ENCODE measurements at regions of chr9 and their contacts with region 1.

Region 1: DNA sequence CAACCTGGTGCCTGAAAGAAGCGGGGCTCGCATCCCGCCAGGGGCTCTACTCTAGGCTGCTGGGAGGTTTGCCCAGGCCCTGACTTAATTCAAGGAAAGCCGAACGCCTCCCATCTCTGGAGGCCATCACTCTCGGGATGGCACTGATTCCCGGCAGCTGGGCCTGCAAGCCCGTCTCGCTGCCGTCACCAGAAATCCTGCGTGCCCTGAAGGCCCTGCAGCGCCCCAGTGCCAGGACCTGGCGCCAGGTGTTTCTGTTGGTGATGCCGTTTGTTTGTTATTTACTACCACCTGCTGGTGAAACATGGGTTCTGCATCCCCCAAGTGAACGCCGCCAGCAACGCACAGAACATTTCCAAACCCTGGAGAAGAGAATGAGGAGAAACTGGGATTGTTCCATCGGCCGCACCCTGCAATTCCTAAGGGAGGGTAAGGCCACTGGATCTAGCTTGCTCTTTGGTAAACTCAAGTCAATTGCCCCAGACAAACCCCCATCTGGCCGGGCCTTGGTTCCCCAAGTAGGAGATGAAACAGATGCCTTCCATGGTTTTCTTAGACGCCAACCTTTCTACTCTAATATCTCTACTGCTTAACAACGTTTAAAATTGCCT is 77.9 kb downstream of the AK8 start:
- DNase-seq: peak; percentile 46
- H3K4me3 Mint-ChIP-seq: no peak overlapping the region
- H3K27ac Mint-ChIP-seq: no peak overlapping the region
- H3K4me1 Mint-ChIP-seq: peaks cover 12% of the 10 kb centered on the region
- H3K27me3 Mint-ChIP-seq: peaks cover 23% of the 10 kb centered on the region

Region 2: DNA sequence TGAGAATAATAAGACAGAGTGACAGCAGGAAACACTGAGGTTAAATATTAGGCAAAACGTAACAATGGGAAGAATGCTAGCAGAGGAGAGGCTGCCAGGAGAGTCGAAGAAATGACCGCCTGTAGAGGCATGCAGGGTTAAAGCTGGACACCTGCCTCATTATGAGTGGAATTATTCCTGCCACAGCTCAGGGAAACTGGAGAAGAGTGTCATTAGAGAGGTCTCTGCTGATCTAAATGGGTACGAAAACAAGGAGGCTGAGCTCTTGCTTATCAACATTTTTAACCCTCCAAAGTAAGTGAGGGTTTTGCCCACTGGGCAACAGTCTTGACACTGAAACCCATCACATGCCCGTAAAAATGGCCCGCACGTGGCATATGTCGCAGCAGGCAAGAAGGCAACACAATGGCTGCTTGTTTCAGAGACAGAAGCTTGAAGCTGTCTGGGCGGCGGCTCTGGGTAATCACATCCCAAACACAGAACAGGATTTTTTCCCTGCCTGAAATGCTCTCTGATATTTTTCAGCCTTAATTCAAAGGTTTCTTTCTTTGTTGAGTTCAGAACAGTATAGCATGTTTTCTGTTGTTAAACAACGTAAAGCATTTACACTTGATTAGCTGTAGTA is 839.2 kb before region 1 on chr9:
- intact Hi-C with region 1: no loop called
- DNase-seq: no peak
- H3K4me3 Mint-ChIP-seq: no peak overlapping the region
- H3K27ac Mint-ChIP-seq: no peak overlapping the region
- H3K4me1 Mint-ChIP-seq: no peaks in the 10 kb centered on the region
- H3K27me3 Mint-ChIP-seq: no peaks in the 10 kb centered on the region

Region 3: DNA sequence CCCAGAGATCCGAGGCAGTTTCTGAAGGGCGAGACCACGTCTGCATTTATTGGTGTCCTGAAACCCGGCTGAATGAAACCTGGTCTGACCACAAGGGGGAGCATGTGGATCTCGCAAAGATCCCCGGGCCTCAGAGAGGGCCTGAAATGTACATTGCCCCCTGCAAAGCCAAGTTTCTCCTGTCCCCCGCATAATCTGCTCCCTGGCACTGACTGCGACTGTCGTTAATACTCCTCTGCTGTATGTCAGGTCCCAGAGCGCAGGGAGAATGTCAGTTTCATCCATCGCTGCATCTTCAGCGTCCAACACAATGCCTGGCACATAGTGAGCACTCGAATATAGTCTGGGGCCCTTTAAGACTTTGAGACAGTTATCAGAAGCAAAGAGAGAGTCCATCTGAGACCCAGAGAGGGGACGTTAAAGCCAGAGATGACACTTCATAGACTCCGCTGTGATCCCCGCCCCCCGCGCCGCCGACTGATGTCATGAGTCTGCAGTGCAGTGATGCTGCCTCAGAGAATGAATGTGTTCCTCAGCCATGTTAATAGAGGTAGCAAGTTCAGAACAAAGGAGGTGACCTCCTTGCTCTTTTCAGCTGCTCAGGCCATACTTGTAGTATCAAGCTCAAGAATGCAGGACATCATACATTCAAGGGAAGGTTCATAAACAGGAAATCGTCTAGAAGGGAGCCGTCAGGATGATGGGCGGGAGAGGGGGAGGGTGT is 292.2 kb before region 1 on chr9:
- intact Hi-C with region 1: loop called (anchors 1 kb)
- DNase-seq: peak; percentile 47
- H3K4me3 Mint-ChIP-seq: no peak overlapping the region
- H3K27ac Mint-ChIP-seq: no peak overlapping the region
- H3K4me1 Mint-ChIP-seq: peaks cover 14% of the 10 kb centered on the region
- H3K27me3 Mint-ChIP-seq: peaks cover 6% of the 10 kb centered on the region

Region 4: DNA sequence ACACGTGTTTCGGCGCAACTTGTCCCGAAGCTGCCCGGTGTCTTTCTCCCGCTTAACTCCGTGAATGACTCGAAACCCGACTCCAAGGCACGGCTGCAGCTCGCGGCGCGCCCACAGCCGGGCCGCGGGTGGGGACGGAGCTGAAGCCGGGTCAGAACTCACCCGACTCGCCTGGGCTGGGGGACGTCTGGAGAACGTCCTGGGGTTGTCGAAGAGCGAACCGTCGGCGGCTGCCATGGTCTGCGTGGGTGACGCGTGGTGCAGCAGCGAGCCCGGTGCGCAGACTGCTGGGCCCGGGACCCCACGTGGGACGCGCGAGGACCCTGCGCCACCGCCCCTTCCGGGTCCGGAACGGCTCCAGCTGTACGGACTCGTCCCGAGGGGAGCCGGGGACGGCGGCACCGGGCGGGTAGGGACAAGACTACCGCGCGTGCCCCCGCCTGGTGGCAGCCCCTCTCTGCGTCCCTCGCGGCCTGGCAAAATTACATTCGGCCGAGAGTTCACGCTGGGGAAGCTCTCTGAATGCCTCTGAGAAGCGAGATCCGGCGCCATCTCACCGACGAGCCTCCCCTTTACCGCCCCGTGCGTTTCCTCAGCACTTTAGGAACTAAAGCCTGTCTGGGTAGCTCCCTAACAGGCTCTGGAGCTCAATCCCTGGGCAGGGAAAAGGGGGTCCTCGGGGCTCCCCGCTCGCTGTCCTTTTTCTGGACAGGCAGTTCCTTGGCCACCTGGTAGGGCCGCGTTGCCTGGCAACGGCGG is 130.3 kb before region 1 on chr9 and contains the start of gene DDX31:
- intact Hi-C with region 1: loop called (anchors 1 kb)
- DNase-seq: peak; percentile 84
- H3K4me3 Mint-ChIP-seq: peak within 1 kb of the TSS; percentile 96
- H3K27ac Mint-ChIP-seq: peak within 1 kb of the TSS; percentile 90
- H3K4me1 Mint-ChIP-seq: peaks cover 38% of the 10 kb centered on the region
- H3K27me3 Mint-ChIP-seq: no peaks in the 10 kb centered on the region
- total RNA-seq, gene DDX31: 32.1 and 34.1 TPM in 2 replicates

Region 5: GRCh38 chr9:132780230-132781007 is 19.7 kb before region 1 on chr9:
- intact Hi-C with region 1: loop called (anchors 2 kb)
- DNase-seq: no peak
- H3K4me3 Mint-ChIP-seq: peak overlapping the region; percentile 23
- H3K27ac Mint-ChIP-seq: peak overlapping the region; percentile 71
- H3K4me1 Mint-ChIP-seq: peaks cover 17% of the 10 kb centered on the region
- H3K27me3 Mint-ChIP-seq: peaks cover 12% of the 10 kb centered on the region

Measured in activated T-helper 1 cell treated with anti-CD3 and anti-CD28 coated beads, Interleukin-12 subunit alpha, Interleukin-12 subunit beta, Interleukin-2, Interleukin-4 antibody, amounts not matched to agents 30 ng/mL and 10 ng/mL and 1 ng/mL, durations not matched to agents 14 hours and 24 hours and 36 hours (primary cell).